ENCODE measurements at regions of chr22 and their contacts with region 1.

Region 1: GRCh38 chr22:48071828-48072227 is 1309.4 kb downstream of the TBC1D22A start:
- DNase-seq: peak; percentile 88
- H3K4me3 ChIP-seq: peak overlapping the region; percentile 31
- H3K27ac ChIP-seq: peak overlapping the region; percentile 92
- H3K4me1 ChIP-seq: peaks cover 69% of the 10 kb centered on the region
- CTCF ChIP-seq: no peak

Region 2: GRCh38 chr22:47794851-47795250 is 277.0 kb before region 1 on chr22:
- CTCF ChIA-PET with region 1: no interaction called
- POLR2A ChIA-PET with region 1: no interaction called
- intact Hi-C with region 1: loop called (anchors 5 kb)
- DNase-seq: no peak
- H3K4me3 ChIP-seq: no peak overlapping the region
- H3K27ac ChIP-seq: no peak overlapping the region
- H3K4me1 ChIP-seq: peaks cover 16% of the 10 kb centered on the region
- CTCF ChIP-seq: no peak

Region 3: DNA sequence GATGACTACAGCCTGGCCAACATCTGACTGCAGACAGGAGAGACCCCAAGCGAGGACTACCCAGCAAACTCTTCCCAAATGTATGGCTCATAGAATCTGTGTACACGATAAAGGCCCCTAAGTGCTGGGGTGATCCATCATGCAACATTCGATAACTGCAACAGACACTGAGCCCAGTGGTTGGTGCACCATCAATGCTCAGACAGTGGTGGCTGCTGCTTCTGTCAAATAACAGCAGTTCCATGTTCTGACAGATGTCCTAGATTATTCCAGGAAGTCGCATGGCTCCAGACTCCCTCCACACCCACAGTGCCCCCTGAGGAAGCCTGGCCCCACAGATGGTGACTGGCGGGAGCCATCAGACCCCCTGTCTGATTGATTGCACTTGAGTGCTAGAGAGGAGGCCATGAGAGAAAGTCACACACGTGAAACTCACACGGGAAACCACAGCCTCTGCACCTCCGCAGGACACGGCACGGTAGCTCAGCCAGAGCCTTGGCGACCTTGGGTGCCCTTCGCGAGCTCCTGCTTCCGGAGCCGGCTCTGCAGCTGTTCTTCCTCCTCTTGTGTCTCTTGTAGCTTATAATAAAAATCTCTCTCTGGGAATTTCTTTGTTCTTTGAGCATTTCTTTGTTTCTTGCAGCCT is 153.4 kb before region 1 on chr22:
- CTCF ChIA-PET with region 1: no interaction called
- POLR2A ChIA-PET with region 1: interaction called, 3 read pairs
- intact Hi-C with region 1: loop called (anchors 1 kb)
- DNase-seq: peak; percentile 94
- H3K4me3 ChIP-seq: peak overlapping the region; percentile 55
- H3K27ac ChIP-seq: peak overlapping the region; percentile 97
- H3K4me1 ChIP-seq: peaks cover 68% of the 10 kb centered on the region
- CTCF ChIP-seq: peak; percentile 27; the same call in 1 of the 2 replicates

Region 4: DNA sequence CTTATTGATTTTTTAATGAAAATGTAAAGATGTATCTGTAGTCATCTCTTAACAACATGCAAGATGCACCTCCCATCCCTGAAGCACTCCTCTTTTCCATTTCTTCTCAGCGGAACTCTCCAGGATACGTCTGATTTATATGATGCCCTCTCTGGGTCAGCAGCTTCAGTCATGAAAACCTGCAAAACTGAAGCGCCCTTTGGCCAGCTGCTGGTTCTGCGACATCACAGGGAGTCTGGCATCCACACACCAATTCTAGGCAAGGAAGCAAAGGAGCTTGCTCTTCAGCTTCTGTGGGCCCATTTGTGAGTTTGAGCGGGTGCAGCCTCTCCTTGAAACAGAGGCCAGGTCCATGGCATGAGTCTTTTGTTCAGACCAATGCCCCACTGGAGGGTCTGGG is 56.1 kb before region 1 on chr22:
- CTCF ChIA-PET with region 1: no interaction called
- POLR2A ChIA-PET with region 1: no interaction called
- intact Hi-C with region 1: no loop called
- DNase-seq: no peak
- H3K4me3 ChIP-seq: no peak overlapping the region
- H3K27ac ChIP-seq: no peak overlapping the region
- H3K4me1 ChIP-seq: no peaks in the 10 kb centered on the region
- CTCF ChIP-seq: no peak

Region 5: DNA sequence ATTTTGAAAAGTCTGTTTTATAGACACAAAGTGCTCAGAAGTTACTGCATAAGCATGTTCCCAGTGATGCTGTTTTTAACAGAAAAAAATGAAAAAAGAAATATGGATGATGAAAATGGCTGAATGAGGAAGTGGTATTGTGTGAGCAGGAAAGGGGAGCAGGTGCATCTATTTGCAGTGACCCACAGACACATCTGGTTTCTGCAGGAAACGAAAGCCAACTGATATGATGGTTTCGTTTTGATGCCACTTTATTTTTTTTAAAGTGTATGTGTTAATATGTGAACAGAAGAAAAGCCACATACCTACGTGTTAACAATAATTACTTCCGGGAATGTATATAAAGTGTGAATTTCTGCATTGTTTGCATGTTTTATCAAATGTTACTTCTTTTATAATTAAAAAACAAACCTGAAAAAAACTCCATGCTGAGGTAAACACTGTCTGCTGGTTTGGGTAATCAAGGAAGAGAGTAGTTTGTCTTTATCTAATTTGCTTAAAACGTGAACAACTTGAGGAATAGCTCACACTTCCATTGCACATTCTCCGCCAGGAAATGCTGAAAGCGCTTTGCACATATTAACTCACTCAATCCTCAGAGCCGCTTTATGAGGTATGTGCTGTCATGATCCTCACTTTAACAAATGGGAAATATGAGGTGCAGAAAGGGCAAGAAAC is 26.6 kb after region 1 on chr22:
- CTCF ChIA-PET with region 1: no interaction called
- POLR2A ChIA-PET with region 1: interaction called, 8 read pairs
- intact Hi-C with region 1: loop called (anchors 1 kb)
- DNase-seq: peak; percentile 96
- H3K4me3 ChIP-seq: peak overlapping the region; percentile 58
- H3K27ac ChIP-seq: peak overlapping the region; percentile 98
- H3K4me1 ChIP-seq: peaks cover 81% of the 10 kb centered on the region
- CTCF ChIP-seq: no peak

Region 6: DNA sequence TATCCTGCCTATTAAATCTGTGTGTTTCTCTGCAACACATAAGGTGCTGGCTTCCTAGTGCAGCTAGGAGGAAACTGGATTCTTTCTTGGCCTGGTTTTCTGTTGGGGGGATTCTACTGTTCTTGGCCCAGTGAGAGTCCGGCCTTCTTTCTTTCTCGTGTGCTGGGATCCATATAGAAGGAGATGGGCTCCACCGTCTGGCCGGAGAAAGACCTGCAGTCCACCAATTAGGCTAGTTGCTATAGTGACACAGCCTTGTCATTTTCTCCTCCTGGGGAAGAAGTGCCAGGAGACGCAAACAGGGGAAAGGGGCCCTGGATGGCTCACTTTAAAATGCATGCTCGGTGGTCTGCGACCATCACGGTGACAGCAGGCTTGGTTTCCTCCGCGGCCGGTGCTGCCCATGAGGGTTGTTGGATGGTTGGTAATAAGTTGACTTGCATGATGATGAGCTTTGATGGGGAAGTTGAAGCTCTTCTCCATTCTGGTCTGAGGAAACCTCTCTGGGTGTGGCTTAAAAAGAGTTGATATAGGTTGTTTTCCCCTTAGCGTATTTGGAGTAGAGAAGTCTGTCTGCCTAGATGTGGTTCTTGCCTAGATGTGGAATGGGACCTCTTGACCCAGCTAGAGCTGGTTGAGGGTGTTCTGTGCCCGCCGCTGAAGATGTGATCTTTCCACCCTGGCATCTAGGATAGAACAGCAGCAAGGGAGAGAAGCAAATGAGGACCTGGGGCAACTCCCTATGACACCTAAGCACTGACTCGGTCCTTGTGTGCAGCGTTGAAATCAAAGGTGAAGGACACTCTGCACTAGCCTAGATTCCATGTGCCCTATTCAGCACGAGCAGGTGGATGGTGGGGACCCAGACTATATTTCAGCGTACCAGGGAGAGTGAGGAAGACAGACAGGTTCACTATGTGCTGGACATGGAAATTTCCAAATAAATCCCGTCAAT is 420.8 kb after region 1 on chr22:
- CTCF ChIA-PET with region 1: interaction called, 3 read pairs
- POLR2A ChIA-PET with region 1: no interaction called
- intact Hi-C with region 1: loop called (anchors 1 kb)
- DNase-seq: peak; percentile 74
- H3K4me3 ChIP-seq: no peak overlapping the region
- H3K27ac ChIP-seq: no peak overlapping the region
- H3K4me1 ChIP-seq: peaks cover 8% of the 10 kb centered on the region
- CTCF ChIP-seq: peak; percentile 97

Measured in OCI-LY7 (cell line).